ENCODE measurements at regions of chr15 and their contacts with region 1.

Region 1: GRCh38 chr15:80567721-80568157 is 127.4 kb upstream of the ABHD17C start:
- DNase-seq: no peak
- ATAC-seq: peak; percentile 74 to 84
- H3K4me3 ChIP-seq: no peak overlapping the region
- H3K27ac ChIP-seq: no peak overlapping the region
- H3K4me1 ChIP-seq: peaks cover 13% of the 10 kb centered on the region
- H3K27me3 ChIP-seq: no peaks in the 10 kb centered on the region
- CTCF ChIP-seq: peak; percentile 72

Region 2: GRCh38 chr15:80379693-80380092 is 188.0 kb before region 1 on chr15:
- intact Hi-C with region 1: no loop called
- DNase-seq: no peak
- ATAC-seq: no peak
- H3K4me3 ChIP-seq: no peak overlapping the region
- H3K27ac ChIP-seq: no peak overlapping the region
- H3K4me1 ChIP-seq: no peaks in the 10 kb centered on the region
- H3K27me3 ChIP-seq: no peaks in the 10 kb centered on the region
- CTCF ChIP-seq: no peak

Region 3: DNA sequence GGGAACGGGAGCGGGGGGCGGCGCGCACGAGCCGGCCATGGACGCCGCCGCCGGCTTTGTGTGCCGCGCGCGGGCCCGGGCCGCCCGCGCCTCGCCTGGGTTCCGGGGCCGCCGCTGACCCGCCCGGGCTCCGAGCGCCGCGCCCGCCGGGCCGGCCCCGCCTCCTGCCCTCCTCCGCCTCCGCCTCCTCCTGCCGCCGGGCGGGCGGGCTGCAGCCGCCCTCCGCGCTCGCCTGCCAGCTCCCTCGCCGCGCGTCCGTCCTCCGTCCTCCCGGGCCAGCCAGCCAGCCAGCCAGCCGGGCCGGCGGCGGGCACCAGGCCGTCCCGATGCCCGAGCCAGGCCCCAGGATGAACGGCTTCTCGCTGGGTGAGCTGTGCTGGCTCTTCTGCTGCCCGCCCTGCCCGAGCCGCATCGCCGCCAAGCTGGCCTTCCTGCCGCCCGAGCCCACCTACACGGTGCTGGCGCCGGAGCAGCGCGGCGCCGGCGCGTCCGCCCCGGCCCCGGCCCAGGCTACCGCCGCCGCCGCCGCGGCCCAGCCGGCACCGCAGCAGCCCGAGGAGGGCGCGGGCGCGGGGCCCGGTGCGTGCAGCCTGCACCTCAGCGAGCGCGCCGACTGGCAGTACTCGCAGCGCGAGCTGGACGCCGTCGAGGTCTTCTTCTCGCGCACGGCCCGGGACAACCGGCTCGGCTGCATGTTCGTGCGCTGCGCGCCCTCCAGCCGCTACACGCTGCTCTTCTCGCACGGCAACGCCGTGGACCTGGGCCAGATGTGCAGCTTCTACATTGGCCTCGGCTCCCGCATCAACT is 127.6 kb after region 1 on chr15 and contains the start of gene ABHD17C:
- intact Hi-C with region 1: loop called (anchors 10 kb)
- DNase-seq: peak; percentile 76
- ATAC-seq: peak; percentile 84 to 87
- H3K4me3 ChIP-seq: peak within 1 kb of the TSS; percentile 80
- H3K27ac ChIP-seq: peak within 1 kb of the TSS; percentile 89
- H3K4me1 ChIP-seq: peaks cover 21% of the 10 kb centered on the region
- H3K27me3 ChIP-seq: no peaks in the 10 kb centered on the region
- CTCF ChIP-seq: no peak
- total RNA-seq, gene ABHD17C: 28.2 TPM

Region 4: GRCh38 chr15:80776420-80777045 is 208.8 kb after region 1 on chr15:
- intact Hi-C with region 1: loop called (anchors 5 kb)
- DNase-seq: peak; percentile 66
- ATAC-seq: peak; percentile 57 to 63
- H3K4me3 ChIP-seq: no peak overlapping the region
- H3K27ac ChIP-seq: peak overlapping the region; percentile 57
- H3K4me1 ChIP-seq: peaks cover 51% of the 10 kb centered on the region
- H3K27me3 ChIP-seq: peaks cover 24% of the 10 kb centered on the region
- CTCF ChIP-seq: peak; percentile 82

Measured in lower lobe of right lung (tissue), 2 donors.